A673 (cell line): ENCODE measurements at regions of chr6 and their contacts with region 1.

Region 1: DNA sequence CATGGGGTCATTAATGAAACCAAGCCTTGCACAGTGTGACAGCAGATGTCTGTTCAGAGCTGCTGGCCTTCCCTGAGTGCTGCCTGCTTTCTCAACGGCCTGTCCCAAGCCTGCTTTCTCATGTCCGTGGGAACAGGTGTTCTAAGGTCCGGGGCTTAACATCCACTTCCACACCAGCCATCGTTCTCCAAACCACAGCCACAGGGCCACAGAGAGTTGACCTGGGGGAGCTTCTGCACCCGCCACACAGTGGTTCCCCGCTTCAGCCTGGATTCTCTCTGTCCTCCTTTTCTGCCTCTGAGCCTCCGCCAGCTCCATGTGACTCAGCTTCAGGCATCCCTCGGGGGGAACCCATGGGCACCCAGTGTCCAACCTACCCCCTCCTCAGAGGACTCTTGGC is 26.9 kb upstream of the PPP1R3G start:
- DNase-seq: no peak
- H3K4me3 ChIP-seq: no peak overlapping the region
- H3K27ac ChIP-seq: no peak overlapping the region
- H3K4me1 ChIP-seq: peaks cover 22% of the 10 kb centered on the region
- H3K27me3 ChIP-seq: no peaks in the 10 kb centered on the region
- CTCF ChIP-seq: no peak

Region 2: DNA sequence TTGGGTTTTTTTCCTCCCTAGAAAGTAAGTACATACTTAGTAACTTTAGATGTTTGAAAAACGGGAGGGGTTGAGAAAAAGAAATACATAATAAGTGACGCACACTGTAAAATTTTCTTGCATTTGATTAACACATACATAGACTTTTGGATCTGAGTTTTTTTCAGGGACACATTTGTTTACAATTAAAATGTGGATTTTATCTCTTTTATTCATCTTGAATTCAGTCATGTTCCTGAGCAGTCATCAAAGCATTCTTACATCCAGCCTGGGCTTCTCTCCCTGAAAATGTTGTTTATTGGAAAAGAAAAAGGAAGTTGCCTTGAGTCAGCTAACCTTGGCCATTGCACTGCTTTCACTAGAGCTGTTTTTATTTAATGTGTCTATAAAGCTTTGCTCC is 45.7 kb before region 1 on chr6:
- CTCF ChIA-PET with region 1: no interaction called
- POLR2A ChIA-PET with region 1: interaction called, 14 read pairs
- intact Hi-C with region 1: no loop called
- DNase-seq: no peak
- H3K4me3 ChIP-seq: no peak overlapping the region
- H3K27ac ChIP-seq: no peak overlapping the region
- H3K4me1 ChIP-seq: no peaks in the 10 kb centered on the region
- H3K27me3 ChIP-seq: no peaks in the 10 kb centered on the region
- CTCF ChIP-seq: no peak

Region 3: DNA sequence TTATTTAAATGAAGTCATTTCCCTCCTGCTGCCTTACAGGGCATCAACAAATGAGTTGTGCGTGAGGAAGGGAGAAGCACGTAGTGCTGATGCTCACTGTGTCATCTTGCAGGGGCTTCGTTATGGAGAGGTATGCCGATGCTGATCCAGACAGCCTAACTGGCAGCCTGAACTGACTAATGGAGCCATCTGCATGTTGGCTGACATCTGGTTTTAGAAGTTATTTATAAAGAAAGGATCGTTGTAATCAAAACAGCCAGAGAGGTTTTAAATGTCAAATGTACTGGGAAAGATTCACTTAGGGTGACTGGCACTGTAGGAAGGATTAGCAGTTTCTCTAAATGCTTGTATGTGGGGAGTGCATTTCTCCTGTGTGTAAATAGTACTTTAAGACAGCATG is 257.6 kb after region 1 on chr6:
- CTCF ChIA-PET with region 1: no interaction called
- POLR2A ChIA-PET with region 1: no interaction called
- intact Hi-C with region 1: no loop called
- DNase-seq: no peak
- H3K4me3 ChIP-seq: no peak overlapping the region
- H3K27ac ChIP-seq: no peak overlapping the region
- H3K4me1 ChIP-seq: no peaks in the 10 kb centered on the region
- H3K27me3 ChIP-seq: no peaks in the 10 kb centered on the region
- CTCF ChIP-seq: no peak

Region 4: GRCh38 chr6:5379647-5380242 is 321.5 kb after region 1 on chr6:
- CTCF ChIA-PET with region 1: interaction called, 4 read pairs
- POLR2A ChIA-PET with region 1: no interaction called
- intact Hi-C with region 1: loop called (anchors 5 kb)
- DNase-seq: peak; percentile 76
- H3K4me3 ChIP-seq: no peak overlapping the region
- H3K27ac ChIP-seq: no peak overlapping the region
- H3K4me1 ChIP-seq: no peaks in the 10 kb centered on the region
- H3K27me3 ChIP-seq: no peaks in the 10 kb centered on the region
- CTCF ChIP-seq: peak; percentile 76

Region 5: DNA sequence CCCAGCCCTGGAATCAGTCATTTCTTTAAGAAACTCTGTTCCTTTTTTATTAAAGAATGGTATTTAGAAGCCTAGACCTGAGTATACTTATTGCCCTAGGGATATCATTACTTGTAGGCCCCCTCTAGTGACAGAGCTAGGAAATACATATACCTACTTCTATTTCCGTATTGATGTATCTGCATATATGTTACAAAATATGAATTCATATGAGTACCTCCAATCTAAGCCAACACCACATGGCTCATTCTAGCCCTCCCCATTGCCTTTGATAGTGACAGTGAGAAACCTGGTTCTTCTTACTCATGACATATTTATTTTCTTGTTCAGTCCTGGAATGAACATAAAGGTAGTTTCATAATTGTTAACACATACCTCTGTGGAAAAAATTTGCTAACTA is 340.3 kb after region 1 on chr6:
- CTCF ChIA-PET with region 1: no interaction called
- POLR2A ChIA-PET with region 1: no interaction called
- intact Hi-C with region 1: loop called (anchors 5 kb)
- DNase-seq: peak; percentile 64
- H3K4me3 ChIP-seq: no peak overlapping the region
- H3K27ac ChIP-seq: no peak overlapping the region
- H3K4me1 ChIP-seq: no peaks in the 10 kb centered on the region
- H3K27me3 ChIP-seq: no peaks in the 10 kb centered on the region
- CTCF ChIP-seq: peak; percentile 73